Activated naive CD8-positive, alpha-beta T cell treated with anti-CD3 and anti-CD28 coated beads, Interleukin-2, amount 10 ng/mL, durations not matched to agents 7 days and 5 days (primary cell): ENCODE measurements at regions of chr13 and their contacts with region 1.

Region 1: GRCh38 chr13:74287724-74288169 is 153.5 kb upstream of the KLF12 start:
- DNase-seq: peak; percentile 48
- ATAC-seq: peak; percentile 52
- H3K4me3 Mint-ChIP-seq: peak overlapping the region; percentile 81
- H3K27ac Mint-ChIP-seq: peak overlapping the region; percentile 86
- H3K4me1 Mint-ChIP-seq: peaks cover 42% of the 10 kb centered on the region
- H3K27me3 Mint-ChIP-seq: no peaks in the 10 kb centered on the region

Region 2: DNA sequence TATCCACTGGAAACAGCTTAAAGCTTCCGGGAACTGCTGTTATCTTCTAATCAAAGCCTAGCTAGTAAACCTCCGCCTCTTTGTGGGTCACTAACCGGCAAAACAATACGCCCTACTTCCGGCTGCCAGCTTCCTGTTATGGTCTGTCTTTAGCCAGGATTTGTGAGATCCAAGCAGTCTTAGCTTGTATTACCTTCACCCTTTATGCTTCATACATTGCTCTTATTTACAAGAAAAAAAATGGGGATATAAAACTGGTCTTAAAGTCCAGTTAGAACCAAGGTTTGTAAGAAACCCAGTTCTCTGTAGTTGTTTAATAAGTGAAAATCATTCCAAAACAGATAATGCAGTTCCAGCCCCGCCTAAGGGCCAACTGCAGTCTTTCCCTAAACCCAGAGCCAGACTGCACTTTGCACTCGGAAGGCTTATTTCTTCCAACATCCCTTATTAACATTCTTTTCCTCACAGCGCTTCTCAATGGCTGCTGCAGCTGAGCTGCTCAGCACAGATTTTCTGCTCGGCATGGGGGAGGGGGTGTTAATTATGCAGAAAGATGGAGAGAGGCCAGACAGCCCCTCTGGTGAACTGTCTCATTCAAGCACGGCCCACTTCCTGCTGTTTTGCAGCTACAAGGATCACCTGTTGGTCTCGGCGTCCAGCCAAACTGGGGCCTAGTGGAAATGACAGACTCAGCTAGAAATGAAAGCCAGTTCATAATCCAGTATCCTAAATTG is 521.9 kb before region 1 on chr13:
- POLR2A ChIA-PET with region 1: interaction called, 10 read pairs
- DNase-seq: peak; percentile 58
- ATAC-seq: peak; percentile 89
- H3K4me3 Mint-ChIP-seq: peak overlapping the region; percentile 81
- H3K27ac Mint-ChIP-seq: peak overlapping the region; percentile 95
- H3K4me1 Mint-ChIP-seq: peaks cover 31% of the 10 kb centered on the region
- H3K27me3 Mint-ChIP-seq: no peaks in the 10 kb centered on the region

Region 3: GRCh38 chr13:74062933-74063332 is 224.8 kb before region 1 on chr13:
- POLR2A ChIA-PET with region 1: interaction called, 11 read pairs
- DNase-seq: no peak
- ATAC-seq: no peak
- H3K4me3 Mint-ChIP-seq: peak overlapping the region; percentile 74
- H3K27ac Mint-ChIP-seq: peak overlapping the region; percentile 86
- H3K4me1 Mint-ChIP-seq: peaks cover 55% of the 10 kb centered on the region
- H3K27me3 Mint-ChIP-seq: no peaks in the 10 kb centered on the region